BJ (cell line): ENCODE measurements at regions of chr19 and their contacts with region 1.

Region 1: GRCh38 chr19:46076951-46077816 is 36.4 kb upstream of the IGFL4 start:
- DNase-seq: no peak
- H3K4me3 ChIP-seq: no peak overlapping the region
- H3K27me3 ChIP-seq: peaks cover 26% of the 10 kb centered on the region
- CTCF ChIP-seq: peak; percentile 99

Region 2: GRCh38 chr19:46030812-46031550 is 46.2 kb before region 1 on chr19:
- CTCF ChIA-PET with region 1: interaction called, 212 read pairs
- POLR2A ChIA-PET with region 1: no interaction called
- DNase-seq: no peak
- H3K4me3 ChIP-seq: no peak overlapping the region
- H3K27me3 ChIP-seq: peaks cover 6% of the 10 kb centered on the region; the same call in 1 of the 2 replicates
- CTCF ChIP-seq: no peak

Region 3: GRCh38 chr19:46049597-46049996 is 27.6 kb before region 1 on chr19:
- CTCF ChIA-PET with region 1: interaction called, 16 read pairs
- POLR2A ChIA-PET with region 1: no interaction called
- DNase-seq: no peak
- H3K4me3 ChIP-seq: no peak overlapping the region
- H3K27me3 ChIP-seq: peaks cover 10% of the 10 kb centered on the region
- CTCF ChIP-seq: no peak

Region 4: DNA sequence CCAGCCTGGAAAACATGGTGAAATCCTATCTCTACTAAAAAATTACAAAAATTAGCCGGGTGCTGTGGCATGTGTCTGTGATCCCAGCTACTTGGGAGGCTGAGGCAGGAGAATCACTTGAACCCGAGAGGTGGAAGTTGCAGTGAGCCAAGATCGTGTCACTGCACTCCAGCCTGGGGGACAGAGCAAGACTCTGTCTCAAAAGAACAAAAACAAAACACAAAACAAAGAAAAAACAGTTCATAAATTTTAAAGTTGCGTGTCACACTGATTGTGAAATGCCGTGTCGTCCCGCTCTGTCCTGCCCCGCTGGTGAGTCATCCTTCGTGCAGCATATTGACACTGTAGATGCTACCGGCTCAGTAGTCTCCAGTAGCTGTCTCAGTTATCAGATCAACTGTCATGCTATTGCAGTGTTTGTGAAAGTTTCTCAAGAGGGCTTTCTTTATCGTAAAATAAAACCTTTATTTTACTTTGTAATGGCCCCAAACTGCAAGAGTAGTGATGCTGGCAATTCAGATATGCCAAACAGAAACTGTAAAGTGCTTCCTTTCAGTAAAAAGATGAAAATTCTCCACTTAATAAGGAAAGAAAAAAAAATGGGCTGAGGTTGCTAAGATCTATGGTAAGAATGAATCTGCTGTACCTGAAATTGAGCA is 115.9 kb after region 1 on chr19:
- CTCF ChIA-PET with region 1: interaction called, 55 read pairs
- POLR2A ChIA-PET with region 1: no interaction called
- DNase-seq: peak; percentile 48
- H3K4me3 ChIP-seq: no peak overlapping the region
- H3K27me3 ChIP-seq: peaks cover 36% of the 10 kb centered on the region
- CTCF ChIP-seq: no peak

Region 5: DNA sequence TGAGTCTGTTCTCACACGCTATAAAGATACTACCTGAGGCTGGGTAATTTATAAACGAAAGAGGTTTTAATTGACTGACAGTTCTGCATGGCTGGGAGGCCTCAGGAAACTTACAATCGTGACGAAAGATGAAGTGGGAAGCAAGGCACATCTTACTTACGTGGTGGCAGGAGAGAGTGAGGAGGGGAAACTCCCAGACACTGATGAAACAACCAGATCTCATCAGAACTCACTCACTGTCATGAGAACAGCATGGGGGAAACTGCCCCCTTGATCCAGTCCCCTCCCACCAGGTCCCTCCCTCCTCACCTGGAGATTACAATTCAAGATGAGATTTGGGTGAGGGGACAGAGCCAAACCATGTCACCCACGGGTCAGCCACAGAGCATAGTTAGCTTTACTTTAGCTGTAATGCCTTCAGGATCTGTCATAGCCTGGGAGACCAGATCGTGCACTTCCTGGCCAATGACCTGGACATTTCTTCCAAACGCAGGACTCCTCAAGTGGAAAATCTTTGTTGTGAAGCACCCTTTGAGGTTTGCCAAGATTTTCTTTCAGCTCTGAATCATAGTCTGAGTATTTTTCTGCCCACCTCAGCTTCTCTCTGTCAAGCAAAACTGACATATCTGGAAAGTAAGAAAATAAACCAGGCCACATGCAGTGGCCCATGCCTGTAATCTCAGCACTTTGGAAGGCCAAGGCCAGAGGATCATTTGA is 194.5 kb after region 1 on chr19:
- CTCF ChIA-PET with region 1: interaction called, 77 read pairs
- POLR2A ChIA-PET with region 1: no interaction called
- DNase-seq: peak; percentile 71
- H3K4me3 ChIP-seq: no peak overlapping the region
- H3K27me3 ChIP-seq: peaks cover 6% of the 10 kb centered on the region
- CTCF ChIP-seq: no peak